ENCODE measurements at regions of chr1 and their contacts with region 1.

Region 1: DNA sequence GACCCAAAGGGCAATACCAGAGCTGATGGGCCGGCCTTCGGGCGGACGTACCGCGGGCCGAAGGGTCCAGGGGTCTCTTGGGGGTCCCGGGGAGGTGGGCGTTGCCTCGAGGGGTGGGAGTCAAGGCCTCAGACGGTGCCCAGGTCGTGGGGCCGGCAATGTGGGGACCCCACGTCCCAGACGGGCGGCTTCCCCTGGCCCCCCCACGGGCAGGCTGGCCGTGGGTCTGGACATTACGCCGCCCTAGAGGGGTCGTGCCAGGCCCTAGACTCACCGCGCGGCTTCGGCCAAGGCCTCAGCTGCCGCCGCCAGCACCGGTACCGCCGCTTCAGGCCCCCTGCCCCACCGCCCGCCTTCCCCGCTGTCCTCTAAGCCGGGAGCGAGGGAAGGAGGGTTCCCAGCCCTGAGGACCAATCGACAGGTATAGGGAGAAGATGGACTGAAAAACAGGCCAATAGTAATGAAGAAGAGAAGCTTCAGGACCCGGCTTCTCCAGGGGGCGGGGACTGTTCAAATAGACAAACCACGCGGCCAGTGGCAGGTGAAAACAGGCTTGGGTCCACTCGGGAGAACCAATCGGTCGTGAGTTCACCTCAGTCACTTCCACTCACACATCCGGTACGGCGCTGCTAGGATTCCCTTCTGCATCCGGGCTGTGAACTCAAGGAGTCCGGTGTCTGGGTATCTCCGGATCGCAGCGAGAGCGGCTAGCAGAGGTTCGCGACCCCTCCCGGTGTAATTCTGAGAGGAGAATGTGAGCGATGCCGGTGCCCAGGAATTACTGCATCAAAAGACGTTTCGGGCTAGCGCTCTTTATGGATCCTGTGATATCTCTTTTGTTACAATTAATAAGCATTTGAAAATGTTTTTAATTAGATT is at the start of gene MTOR:
- DNase-seq: peak; percentile 92 to 100 (median 96)
- ATAC-seq: peak; percentile 97
- H3K4me3 ChIP-seq: peak within 1 kb of the TSS; percentile 85 to 90
- H3K4me3 Mint-ChIP-seq: peak within 1 kb of the TSS; percentile 81
- H3K27ac ChIP-seq: peak within 1 kb of the TSS; percentile 61 to 81
- H3K27ac Mint-ChIP-seq: peak within 1 kb of the TSS; percentile 89
- H3K4me1 ChIP-seq: peaks cover 12% of the 10 kb centered on the region
- H3K4me1 Mint-ChIP-seq: peaks cover 20% of the 10 kb centered on the region
- H3K27me3 ChIP-seq: no peaks in the 10 kb centered on the region
- H3K27me3 Mint-ChIP-seq: no peaks in the 10 kb centered on the region
- CTCF ChIP-seq: no peak
- total RNA-seq, gene MTOR: 24.7 to 25.1 TPM

Region 2: GRCh38 chr1:11059990-11060830 is 202.2 kb before region 1 on chr1 and contains the start of gene SRM:
- CTCF ChIA-PET with region 1: no interaction called
- POLR2A ChIA-PET with region 1: interaction called, 5 read pairs
- intact Hi-C with region 1: loop called in 1 of 2 experiments (anchors 1 kb)
- DNase-seq: peak; percentile 80 to 95 (median 89)
- ATAC-seq: peak; percentile 94
- H3K4me3 ChIP-seq: peak within 1 kb of the TSS; percentile 77 to 84
- H3K4me3 Mint-ChIP-seq: peak within 1 kb of the TSS; percentile 91
- H3K27ac ChIP-seq: peak within 1 kb of the TSS; percentile 69 to 82
- H3K27ac Mint-ChIP-seq: peak within 1 kb of the TSS; percentile 92
- H3K4me1 ChIP-seq: peaks cover 22% of the 10 kb centered on the region
- H3K4me1 Mint-ChIP-seq: peaks cover 32% of the 10 kb centered on the region
- H3K27me3 ChIP-seq: no peaks in the 10 kb centered on the region
- H3K27me3 Mint-ChIP-seq: no peaks in the 10 kb centered on the region
- CTCF ChIP-seq: peak; percentile 49
- total RNA-seq, gene SRM: 31.4 to 40.6 TPM

Region 3: GRCh38 chr1:11272832-11273594 is 10.6 kb after region 1 on chr1 and contains the start of gene UBIAD1:
- CTCF ChIA-PET with region 1: interaction called, 4 read pairs
- POLR2A ChIA-PET with region 1: interaction called, 27 read pairs
- intact Hi-C with region 1: loop called (anchors 1 kb)
- DNase-seq: peak; percentile 66 to 92 (median 84)
- ATAC-seq: peak; percentile 78
- H3K4me3 ChIP-seq: peak within 1 kb of the TSS; percentile 69 to 100
- H3K4me3 Mint-ChIP-seq: peak within 1 kb of the TSS; percentile 89
- H3K27ac ChIP-seq: peak within 1 kb of the TSS; percentile 74 to 95
- H3K27ac Mint-ChIP-seq: peak within 1 kb of the TSS; percentile 94
- H3K4me1 ChIP-seq: peaks cover 30% of the 10 kb centered on the region
- H3K4me1 Mint-ChIP-seq: peaks cover 34% of the 10 kb centered on the region
- H3K27me3 ChIP-seq: no peaks in the 10 kb centered on the region
- H3K27me3 Mint-ChIP-seq: no peaks in the 10 kb centered on the region
- CTCF ChIP-seq: no peak
- total RNA-seq, gene UBIAD1: 15.9 to 18.2 TPM

Region 4: GRCh38 chr1:11298390-11299224 is 36.2 kb after region 1 on chr1:
- CTCF ChIA-PET with region 1: interaction called, 17 read pairs
- POLR2A ChIA-PET with region 1: interaction called, 3 read pairs
- intact Hi-C with region 1: no loop called
- DNase-seq: no peak
- ATAC-seq: no peak
- H3K4me3 ChIP-seq: no peak overlapping the region
- H3K4me3 Mint-ChIP-seq: no peak overlapping the region
- H3K27ac ChIP-seq: no peak overlapping the region
- H3K27ac Mint-ChIP-seq: no peak overlapping the region
- H3K4me1 ChIP-seq: peaks cover 16% of the 10 kb centered on the region
- H3K4me1 Mint-ChIP-seq: peaks cover 17% of the 10 kb centered on the region
- H3K27me3 ChIP-seq: no peaks in the 10 kb centered on the region
- H3K27me3 Mint-ChIP-seq: no peaks in the 10 kb centered on the region
- CTCF ChIP-seq: no peak